HEK293 (cell line): ENCODE measurements at regions of chr1 and their contacts with region 1.

Region 1: DNA sequence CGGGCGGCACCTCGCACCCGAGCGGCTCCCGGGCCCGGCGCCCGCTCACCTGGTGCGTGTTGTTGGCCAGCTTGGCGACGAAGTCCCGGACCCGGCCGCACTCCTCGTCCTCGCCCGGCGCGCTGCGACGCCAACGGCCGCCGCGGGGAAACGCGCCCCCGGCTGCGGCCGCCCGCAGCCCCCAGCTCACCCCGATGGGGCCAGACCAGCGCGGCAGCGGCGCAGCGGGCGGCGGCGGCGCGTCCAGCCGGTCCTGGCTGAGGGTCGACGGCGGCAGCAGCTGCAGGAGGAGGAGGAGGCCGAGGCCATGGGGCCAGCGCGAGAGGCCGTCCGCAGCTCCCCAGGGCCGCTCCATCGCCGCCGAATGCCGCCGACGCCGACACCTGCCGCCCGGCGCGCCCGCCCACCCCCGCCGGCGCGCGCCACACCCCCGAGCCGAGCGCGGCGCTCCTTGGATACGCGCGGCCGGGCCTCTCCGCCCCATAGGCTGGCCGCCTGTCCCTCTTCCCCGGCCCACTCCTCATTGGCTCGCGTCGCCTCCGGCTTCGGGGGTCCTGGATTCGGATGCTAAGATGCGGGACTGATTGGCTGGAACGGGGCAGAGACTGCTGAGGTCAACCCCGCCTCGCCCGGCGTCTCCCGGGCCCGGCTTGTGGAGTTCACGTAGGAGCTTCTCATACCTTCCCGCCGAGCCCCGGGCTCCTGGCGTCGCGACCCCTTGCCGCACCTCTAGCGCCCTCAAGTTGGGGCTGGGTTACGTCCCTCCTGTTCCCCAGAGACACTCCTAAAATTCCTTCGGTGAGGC is at the start of gene SORT1:
- H3K4me3 ChIP-seq: peak within 1 kb of the TSS; percentile 67
- H3K27ac ChIP-seq: peak within 1 kb of the TSS; percentile 79; the same call in 1 of the 2 replicates
- H3K4me1 ChIP-seq: peaks cover 12% of the 10 kb centered on the region
- CTCF ChIP-seq: 0 out of 2 replicates have a peak, but pooled peaks have one; percentile 15

Region 2: DNA sequence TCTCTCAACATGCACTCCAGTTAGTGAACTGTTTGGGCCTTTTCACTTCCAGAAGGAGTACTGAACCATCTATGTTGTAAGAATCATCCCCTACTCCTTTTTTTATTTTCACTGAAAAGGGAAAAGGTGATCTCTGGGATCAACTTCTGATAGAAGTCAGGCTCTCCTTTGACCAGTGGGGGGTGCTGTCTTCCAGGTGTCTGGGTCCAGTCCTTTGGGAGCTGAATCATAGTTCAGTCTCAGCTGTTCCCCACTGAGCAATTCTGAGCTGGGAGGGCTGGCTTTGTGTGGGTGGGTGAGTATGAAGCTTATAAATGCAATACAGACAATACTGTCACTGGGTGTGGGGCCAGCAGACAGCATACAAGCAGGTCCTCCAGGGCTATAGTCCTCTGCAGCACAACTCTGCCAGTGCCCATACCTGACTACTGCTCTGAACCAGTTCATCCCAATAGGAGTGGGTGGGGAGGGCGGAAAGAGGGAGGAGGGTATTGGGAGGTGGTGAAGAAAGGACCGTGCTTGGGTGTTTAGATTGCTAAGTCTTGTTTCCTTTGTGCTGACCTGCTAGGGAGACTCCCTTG is 196.5 kb before region 1 on chr1:
- CTCF ChIA-PET with region 1: interaction called, 32 read pairs
- POLR2A ChIA-PET with region 1: no interaction called
- H3K4me3 ChIP-seq: no peak overlapping the region
- H3K27ac ChIP-seq: no peak overlapping the region
- H3K4me1 ChIP-seq: no peaks in the 10 kb centered on the region
- CTCF ChIP-seq: no peak; the same call in 1 of the 2 replicates

Region 3: DNA sequence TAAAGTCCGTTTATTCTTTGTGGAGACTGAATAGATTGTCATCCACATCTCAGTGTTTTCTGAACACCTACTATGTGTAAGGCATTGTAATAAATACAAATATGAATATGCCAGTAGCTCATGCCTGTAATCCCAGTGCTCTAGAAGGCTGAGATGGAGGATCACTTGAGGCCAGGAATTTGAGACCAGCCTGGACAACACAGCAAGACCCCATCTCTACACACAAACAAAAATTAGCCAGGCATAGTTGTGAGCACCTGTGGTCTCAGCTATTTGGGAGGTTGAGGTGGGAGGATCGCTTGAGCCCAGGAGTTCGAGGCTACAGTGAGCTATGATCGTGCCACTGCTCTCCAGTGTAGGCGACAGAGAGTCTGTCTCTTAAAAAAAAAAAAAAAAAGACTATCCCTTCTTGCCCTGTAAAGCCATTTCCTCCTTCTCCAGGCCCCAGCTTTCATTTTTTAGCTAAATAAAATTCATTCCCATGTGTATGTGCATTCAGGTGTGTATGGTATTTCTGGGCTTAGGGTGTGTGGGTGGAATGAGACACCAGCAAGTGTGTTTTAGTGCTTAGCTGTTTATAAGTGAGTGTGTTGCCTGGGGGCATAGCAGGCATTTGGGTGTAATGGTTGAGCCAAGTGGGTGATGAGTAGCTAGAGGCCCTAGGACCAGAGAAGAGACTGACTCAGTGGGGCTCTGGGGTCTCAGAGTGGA is 140.6 kb before region 1 on chr1:
- CTCF ChIA-PET with region 1: interaction called, 42 read pairs
- POLR2A ChIA-PET with region 1: interaction called, 7 read pairs
- H3K4me3 ChIP-seq: no peak overlapping the region
- H3K27ac ChIP-seq: no peak overlapping the region
- H3K4me1 ChIP-seq: peaks cover 5% of the 10 kb centered on the region; the same call in 1 of the 2 replicates
- CTCF ChIP-seq: no peak

Region 4: GRCh38 chr1:109282952-109283747 is 114.6 kb before region 1 on chr1 and contains the start of gene PSRC1:
- CTCF ChIA-PET with region 1: interaction called, 126 read pairs
- POLR2A ChIA-PET with region 1: interaction called, 30 read pairs
- H3K4me3 ChIP-seq: peak within 1 kb of the TSS; percentile 75
- H3K27ac ChIP-seq: peak within 1 kb of the TSS; percentile 70
- H3K4me1 ChIP-seq: peaks cover 3% of the 10 kb centered on the region
- CTCF ChIP-seq: peak; percentile 18; the same call in 1 of the 2 replicates

Region 5: DNA sequence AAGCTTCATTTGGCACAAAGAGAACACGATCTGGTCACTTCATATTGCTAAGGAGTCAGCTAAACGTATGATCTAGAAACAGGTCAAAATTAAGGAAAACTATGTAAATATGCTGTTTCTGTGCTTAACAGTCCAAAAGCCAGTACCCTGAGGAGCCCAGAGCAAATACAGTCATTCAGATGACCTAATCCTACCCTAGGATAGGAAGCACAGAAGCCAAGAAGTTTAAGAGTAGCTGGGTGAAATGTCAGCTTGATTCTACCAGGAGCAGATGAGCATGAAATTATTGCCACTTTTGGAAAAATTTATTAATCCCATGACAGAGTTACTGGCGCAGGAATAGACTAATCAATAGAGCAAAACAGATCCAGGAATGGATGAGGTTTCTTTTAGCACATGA is 18.3 kb before region 1 on chr1:
- CTCF ChIA-PET with region 1: interaction called, 17 read pairs
- POLR2A ChIA-PET with region 1: interaction called, 5 read pairs
- H3K4me3 ChIP-seq: no peak overlapping the region
- H3K27ac ChIP-seq: no peak overlapping the region
- H3K4me1 ChIP-seq: no peaks in the 10 kb centered on the region; the same call in 1 of the 2 replicates
- CTCF ChIP-seq: no peak

Region 6: DNA sequence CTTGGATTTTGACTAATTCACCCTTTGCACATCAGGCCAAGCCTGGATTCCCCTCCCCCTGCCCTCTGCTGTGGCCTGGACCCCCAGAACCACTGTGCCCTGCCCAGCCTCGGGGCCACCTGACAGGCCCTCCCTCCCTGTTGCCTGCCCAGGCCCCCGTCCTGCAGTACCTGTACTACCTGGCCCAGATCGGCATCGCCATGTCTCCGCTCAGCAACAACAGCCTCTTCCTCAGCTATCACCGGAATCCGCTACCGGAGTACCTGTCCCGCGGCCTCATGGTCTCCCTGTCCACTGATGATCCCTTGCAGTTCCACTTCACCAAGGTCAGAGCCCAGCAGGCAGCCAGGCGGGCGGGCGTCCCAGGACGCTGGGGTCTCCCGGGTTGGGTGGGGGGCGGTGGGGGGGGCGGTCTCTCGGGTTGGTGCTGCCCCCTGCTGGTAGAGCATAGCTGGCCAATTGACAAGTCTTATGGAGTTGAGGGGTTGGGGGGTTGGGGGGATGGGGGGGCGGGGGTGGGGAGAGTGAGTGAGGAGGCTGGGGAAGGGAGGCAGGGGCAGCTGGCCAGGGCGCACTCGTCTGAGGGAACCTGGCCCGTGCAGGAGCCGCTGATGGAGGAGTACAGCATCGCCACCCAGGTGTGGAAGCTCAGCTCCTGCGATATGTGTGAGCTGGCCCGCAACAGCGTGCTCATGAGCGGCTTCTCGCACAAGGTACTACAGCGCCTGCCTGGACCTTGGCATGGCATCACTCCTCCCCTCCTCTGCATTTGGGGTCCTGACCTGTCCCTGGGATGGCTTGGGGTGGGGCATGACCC is 232.5 kb after region 1 on chr1:
- CTCF ChIA-PET with region 1: no interaction called
- POLR2A ChIA-PET with region 1: no interaction called
- H3K4me3 ChIP-seq: no peak overlapping the region
- H3K27ac ChIP-seq: no peak overlapping the region
- H3K4me1 ChIP-seq: no peaks in the 10 kb centered on the region
- CTCF ChIP-seq: no peak